H1 (cell line): ENCODE measurements at regions of chr16 and their contacts with region 1.

Region 1: GRCh38 chr16:2155091-2156021 is at the start of gene TRAF7:
- DNase-seq: peak; percentile 99
- H3K4me3 ChIP-seq: peak within 1 kb of the TSS; percentile 93 to 100 (median 98)
- H3K27ac ChIP-seq: peak within 1 kb of the TSS; percentile 83
- H3K4me1 ChIP-seq: peaks cover 0 to 52% (median 34%) of the 10 kb centered on the region in 4 experiments; a peak in 6 of 7 replicates
- H3K27me3 ChIP-seq: no peaks in the 10 kb centered on the region
- CTCF ChIP-seq: no peak; a peak in 1 of 4 replicates
- EP300 ChIP-seq: no peak
- POLR2A ChIP-seq: peak in 1 of 2 experiments; percentile 100; a peak in 2 of 3 replicates
- RAD21 ChIP-seq: no peak
- total RNA-seq, gene TRAF7: 148 and 155 TPM in 2 replicates

Region 2: GRCh38 chr16:1964506-1965395 is 190.6 kb before region 1 on chr16 and contains the start of gene RPS2:
- CTCF ChIA-PET with region 1: no interaction called
- POLR2A ChIA-PET with region 1: interaction called, 14 read pairs
- DNase-seq: peak; percentile 94 to 97
- H3K4me3 ChIP-seq: peak within 1 kb of the TSS; percentile 98 to 99 (median 98)
- H3K27ac ChIP-seq: peak within 1 kb of the TSS; percentile 94
- H3K4me1 ChIP-seq: peaks cover 0 to 22% (median 5%) of the 10 kb centered on the region in 4 experiments; a peak in 5 of 7 replicates
- H3K27me3 ChIP-seq: no peaks in the 10 kb centered on the region
- CTCF ChIP-seq: no peak
- EP300 ChIP-seq: no peak
- POLR2A ChIP-seq: peak; percentile 99 to 100
- RAD21 ChIP-seq: no peak
- total RNA-seq, gene RPS2: 3,974 and 4,042 TPM in 2 replicates

Region 3: GRCh38 chr16:1997494-1998353 is 157.6 kb before region 1 on chr16:
- CTCF ChIA-PET with region 1: no interaction called
- POLR2A ChIA-PET with region 1: interaction called, 11 read pairs
- DNase-seq: no peak
- H3K4me3 ChIP-seq: no peak overlapping the region
- H3K27ac ChIP-seq: no peak overlapping the region
- H3K4me1 ChIP-seq: peaks cover 0 to 7% (median 3%) of the 10 kb centered on the region in 4 experiments; a peak in 3 of 7 replicates
- H3K27me3 ChIP-seq: peaks cover 0 to 7% (median 0%) of the 10 kb centered on the region in 4 experiments; a peak in 1 of 7 replicates
- CTCF ChIP-seq: no peak
- EP300 ChIP-seq: no peak
- POLR2A ChIP-seq: no peak
- RAD21 ChIP-seq: no peak

Region 4: DNA sequence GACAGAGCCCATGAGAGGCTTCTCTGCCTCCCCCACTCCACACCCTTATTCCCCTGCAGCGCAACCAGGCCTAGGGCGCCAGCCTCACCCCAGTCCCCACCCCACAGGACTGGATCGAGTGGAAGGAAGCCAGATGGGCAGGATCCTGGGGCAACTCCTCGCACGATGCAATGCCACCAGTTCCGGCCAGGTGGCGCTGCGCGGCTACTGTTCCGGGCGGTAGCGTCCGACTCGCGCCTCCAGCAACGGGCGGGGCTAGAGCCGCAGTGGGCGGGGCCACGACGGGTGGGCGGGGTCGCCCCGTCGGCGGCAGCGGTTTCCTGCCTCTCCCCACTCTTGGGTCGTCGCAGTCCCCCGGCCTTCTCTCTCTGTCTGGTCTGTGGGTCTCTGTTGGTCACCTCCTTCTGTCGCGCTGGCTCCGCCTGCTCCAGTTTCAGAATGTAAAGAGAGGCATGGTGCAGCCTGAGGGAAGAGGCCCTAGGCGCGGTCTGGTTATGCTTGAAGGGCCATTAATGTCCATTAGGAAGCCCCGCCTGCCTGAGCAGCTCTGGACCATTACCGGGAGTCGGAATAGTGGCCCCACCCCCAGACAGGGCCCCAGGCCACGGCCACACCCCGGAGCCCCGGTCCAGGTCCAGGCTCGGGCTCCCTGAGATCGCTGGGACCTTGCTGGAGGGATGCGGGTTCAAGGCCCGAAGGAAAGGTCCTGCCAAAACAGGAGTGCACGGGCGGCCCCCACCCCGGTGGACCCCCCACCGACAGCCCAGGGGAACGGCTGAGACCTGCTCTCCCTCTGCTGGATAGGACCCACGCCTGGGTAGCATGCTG is 132.0 kb before region 1 on chr16:
- CTCF ChIA-PET with region 1: interaction called, 6 read pairs
- POLR2A ChIA-PET with region 1: interaction called, 14 read pairs
- DNase-seq: peak; percentile 71 to 100
- H3K4me3 ChIP-seq: peak overlapping the region; percentile 21 to 59 (median 32); a peak in 6 of 8 replicates
- H3K27ac ChIP-seq: no peak overlapping the region
- H3K4me1 ChIP-seq: peaks cover 0 to 27% (median 13%) of the 10 kb centered on the region in 4 experiments; a peak in 5 of 7 replicates
- H3K27me3 ChIP-seq: peaks cover 22 to 59% (median 52%) of the 10 kb centered on the region in 4 experiments
- CTCF ChIP-seq: peak in 2 of 3 experiments; percentile 92 to 99; a peak in 3 of 4 replicates
- EP300 ChIP-seq: no peak
- POLR2A ChIP-seq: no peak
- RAD21 ChIP-seq: peak; percentile 92 to 93

Region 5: GRCh38 chr16:2063861-2064260 is 91.5 kb before region 1 on chr16:
- CTCF ChIA-PET with region 1: no interaction called
- POLR2A ChIA-PET with region 1: interaction called, 11 read pairs
- DNase-seq: no peak
- H3K4me3 ChIP-seq: no peak overlapping the region
- H3K27ac ChIP-seq: no peak overlapping the region
- H3K4me1 ChIP-seq: no peaks in the 10 kb centered on the region
- H3K27me3 ChIP-seq: no peaks in the 10 kb centered on the region
- CTCF ChIP-seq: no peak
- EP300 ChIP-seq: no peak
- POLR2A ChIP-seq: no peak
- RAD21 ChIP-seq: no peak

Region 6: GRCh38 chr16:2194852-2195321 is 39.5 kb after region 1 on chr16:
- CTCF ChIA-PET with region 1: interaction called, 5 read pairs
- POLR2A ChIA-PET with region 1: interaction called, 26 read pairs
- DNase-seq: peak in 1 of 2 experiments; percentile 80
- H3K4me3 ChIP-seq: peak overlapping the region; percentile 39 to 74 (median 48); a peak in 7 of 8 replicates
- H3K27ac ChIP-seq: no peak overlapping the region; the same call in 1 of the 2 replicates
- H3K4me1 ChIP-seq: peaks cover 0 to 10% (median 3%) of the 10 kb centered on the region in 4 experiments; a peak in 4 of 7 replicates
- H3K27me3 ChIP-seq: peaks cover 4 to 32% (median 24%) of the 10 kb centered on the region in 4 experiments
- CTCF ChIP-seq: peak; percentile 72 to 98 (median 85)
- EP300 ChIP-seq: no peak
- POLR2A ChIP-seq: no peak
- RAD21 ChIP-seq: peak; percentile 88

Region 7: GRCh38 chr16:2236337-2237101 is 81.2 kb after region 1 on chr16 and contains the start of gene DNASE1L2:
- CTCF ChIA-PET with region 1: no interaction called
- POLR2A ChIA-PET with region 1: interaction called, 12 read pairs
- DNase-seq: peak in 1 of 2 experiments; percentile 79
- H3K4me3 ChIP-seq: peak within 1 kb of the TSS; percentile 19 to 63 (median 37); a peak in 7 of 8 replicates
- H3K27ac ChIP-seq: no peak within 1 kb of the TSS
- H3K4me1 ChIP-seq: peaks cover 0 to 19% (median 10%) of the 10 kb centered on the region in 4 experiments; a peak in 5 of 7 replicates
- H3K27me3 ChIP-seq: peaks cover 4 to 20% (median 16%) of the 10 kb centered on the region in 4 experiments; a peak in 6 of 7 replicates
- CTCF ChIP-seq: peak in 1 of 3 experiments; percentile 0; a peak in 1 of 4 replicates
- EP300 ChIP-seq: no peak
- POLR2A ChIP-seq: peak in 1 of 2 experiments; percentile 46; a peak in 1 of 3 replicates
- RAD21 ChIP-seq: no peak
- total RNA-seq, gene DNASE1L2: 0.19 and 0.35 TPM in 2 replicates